ENCODE measurements at regions of chr11 and their contacts with region 1.

Region 1: GRCh38 chr11:113338730-113339129 is 24.3 kb downstream of the TTC12 start:
- DNase-seq: no peak
- ATAC-seq: no peak
- H3K4me3 ChIP-seq: no peak overlapping the region
- H3K4me3 Mint-ChIP-seq: no peak overlapping the region
- H3K27ac ChIP-seq: no peak overlapping the region
- H3K27ac Mint-ChIP-seq: peak overlapping the region in 1 of 9 donors; percentile 37
- H3K4me1 ChIP-seq: no peaks in the 10 kb centered on the region
- H3K4me1 Mint-ChIP-seq: peaks cover 0 to 4% (median 0%) of the 10 kb centered on the region in 7 donors
- H3K27me3 ChIP-seq: no peaks in the 10 kb centered on the region
- H3K27me3 Mint-ChIP-seq: no peaks in the 10 kb centered on the region

Region 2: GRCh38 chr11:113222241-113222640 is 116.5 kb before region 1 on chr11:
- CTCF ChIA-PET with region 1: no interaction called
- POLR2A ChIA-PET with region 1: no interaction called
- intact Hi-C with region 1: no loop called
- DNase-seq: no peak
- ATAC-seq: no peak
- H3K4me3 ChIP-seq: no peak overlapping the region
- H3K4me3 Mint-ChIP-seq: no peak overlapping the region
- H3K27ac ChIP-seq: no peak overlapping the region
- H3K27ac Mint-ChIP-seq: no peak overlapping the region
- H3K4me1 ChIP-seq: no peaks in the 10 kb centered on the region
- H3K4me1 Mint-ChIP-seq: no peaks in the 10 kb centered on the region
- H3K27me3 ChIP-seq: no peaks in the 10 kb centered on the region
- H3K27me3 Mint-ChIP-seq: peaks cover 7 to 31% (median 19%) of the 10 kb centered on the region in 5 donors

Region 3: DNA sequence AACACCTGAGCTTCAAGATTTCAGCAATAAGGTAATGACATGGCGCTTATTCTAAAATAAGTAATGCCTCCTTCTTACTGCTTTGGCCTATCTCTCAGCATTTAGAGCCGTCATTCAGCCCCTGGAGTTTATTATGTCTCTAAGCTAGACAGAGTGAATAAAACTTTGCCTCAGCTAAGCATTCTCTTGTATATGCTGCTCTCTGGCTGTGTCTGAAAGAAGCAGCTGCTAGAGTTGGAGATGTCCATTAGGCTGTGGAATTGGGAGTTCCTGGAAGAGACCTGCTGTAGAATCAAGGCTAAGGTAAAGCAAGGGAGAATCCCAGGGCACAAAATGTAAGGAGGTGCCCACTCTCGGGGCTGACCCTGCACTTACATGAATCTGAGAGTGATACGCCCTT is 59.8 kb before region 1 on chr11:
- CTCF ChIA-PET with region 1: no interaction called
- POLR2A ChIA-PET with region 1: no interaction called
- intact Hi-C with region 1: no loop called
- DNase-seq: no peak
- ATAC-seq: no peak
- H3K4me3 ChIP-seq: no peak overlapping the region
- H3K4me3 Mint-ChIP-seq: no peak overlapping the region
- H3K27ac ChIP-seq: no peak overlapping the region
- H3K27ac Mint-ChIP-seq: no peak overlapping the region
- H3K4me1 ChIP-seq: no peaks in the 10 kb centered on the region
- H3K4me1 Mint-ChIP-seq: peaks cover 0 to 9% (median 0%) of the 10 kb centered on the region in 7 donors
- H3K27me3 ChIP-seq: no peaks in the 10 kb centered on the region
- H3K27me3 Mint-ChIP-seq: no peaks in the 10 kb centered on the region

Region 4: DNA sequence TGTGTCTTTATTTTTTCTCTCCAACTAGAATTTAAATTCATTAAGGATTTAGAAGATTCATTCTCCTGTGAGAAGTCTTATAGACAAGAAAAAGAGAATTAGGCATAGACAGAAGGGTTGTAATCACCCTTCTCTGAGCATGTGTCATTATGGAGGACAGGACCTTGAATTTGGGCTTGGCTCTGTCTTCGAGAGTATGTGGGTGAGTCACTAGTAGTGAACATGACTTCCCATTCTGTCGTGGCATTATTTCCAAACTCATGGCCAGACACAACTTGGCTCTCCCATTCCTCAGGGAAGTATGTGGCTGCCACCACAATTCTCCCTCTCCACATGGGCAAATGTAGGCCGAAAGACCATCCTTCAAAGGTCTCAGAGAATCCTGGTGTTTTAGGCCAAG is 34.6 kb after region 1 on chr11:
- CTCF ChIA-PET with region 1: no interaction called
- POLR2A ChIA-PET with region 1: no interaction called
- intact Hi-C with region 1: loop called in 1 of 2 experiments (anchors 5 kb)
- DNase-seq: no peak
- ATAC-seq: no peak
- H3K4me3 ChIP-seq: no peak overlapping the region
- H3K4me3 Mint-ChIP-seq: no peak overlapping the region
- H3K27ac ChIP-seq: no peak overlapping the region
- H3K27ac Mint-ChIP-seq: peak overlapping the region in 3 of 9 donors; percentile 0 to 48 (median 1)
- H3K4me1 ChIP-seq: no peaks in the 10 kb centered on the region
- H3K4me1 Mint-ChIP-seq: no peaks in the 10 kb centered on the region
- H3K27me3 ChIP-seq: no peaks in the 10 kb centered on the region
- H3K27me3 Mint-ChIP-seq: peaks cover 0 to 2% (median 0%) of the 10 kb centered on the region in 5 donors